ENCODE measurements at regions of chr18 and their contacts with region 1.

Region 1: DNA sequence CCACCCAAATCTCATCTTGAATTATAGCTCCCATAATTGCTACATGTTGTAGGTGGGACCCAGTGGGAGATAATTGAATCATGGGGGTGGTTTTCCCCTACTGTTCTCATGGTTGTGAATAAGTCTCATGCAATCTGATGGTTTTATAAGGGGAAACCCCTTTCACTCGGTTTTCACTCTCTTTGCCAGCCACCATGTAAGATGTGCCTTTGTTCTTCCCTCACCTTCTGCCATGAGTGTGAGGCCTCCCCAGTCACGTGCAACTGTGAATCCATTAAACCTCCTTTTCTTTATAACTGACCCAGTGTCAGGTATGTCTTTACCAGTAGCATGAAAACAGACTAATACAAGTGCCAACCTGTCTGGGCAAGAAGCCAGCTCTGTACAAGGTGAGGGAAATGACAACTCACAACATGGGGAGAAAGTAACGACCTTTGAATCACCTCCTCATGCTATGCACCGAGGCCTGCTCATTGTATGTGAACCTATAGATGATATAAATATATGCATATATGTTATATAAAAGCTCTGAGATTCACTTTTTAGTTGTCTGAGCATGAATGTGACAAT is 162.2 kb downstream of the ALPK2 start:
- DNase-seq: no peak
- H3K4me3 ChIP-seq: no peak overlapping the region
- H3K27ac ChIP-seq: no peak overlapping the region
- H3K4me1 ChIP-seq: no peaks in the 10 kb centered on the region
- H3K27me3 ChIP-seq: no peaks in the 10 kb centered on the region
- CTCF ChIP-seq: no peak
- EP300 ChIP-seq: no peak
- POLR2A ChIP-seq: no peak

Region 2: DNA sequence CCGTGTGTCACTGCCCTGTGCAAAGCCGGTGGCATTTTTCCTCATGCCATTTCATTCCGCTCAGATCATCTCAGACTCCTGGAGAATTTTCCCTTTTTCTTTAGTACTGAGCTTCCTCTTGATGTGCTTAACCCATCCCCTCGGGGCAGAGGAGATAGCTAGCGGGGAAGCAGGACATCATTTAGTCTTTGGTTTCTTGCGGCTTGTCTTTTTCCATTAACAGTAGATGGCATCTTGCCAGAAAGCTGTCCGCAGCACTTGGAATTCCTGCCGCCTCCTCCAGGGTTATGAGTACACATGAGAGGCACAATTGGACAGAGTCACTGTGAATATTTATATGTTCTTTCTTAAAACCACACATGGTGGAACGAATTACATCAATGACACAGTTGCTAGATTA is 64.5 kb before region 1 on chr18:
- intact Hi-C with region 1: loop called in 1 of 4 experiments (anchors 10 kb)
- DNase-seq: no peak
- H3K4me3 ChIP-seq: no peak overlapping the region
- H3K27ac ChIP-seq: no peak overlapping the region
- H3K4me1 ChIP-seq: peaks cover 3% of the 10 kb centered on the region
- H3K27me3 ChIP-seq: no peaks in the 10 kb centered on the region
- CTCF ChIP-seq: no peak
- EP300 ChIP-seq: no peak
- POLR2A ChIP-seq: no peak

Region 3: GRCh38 chr18:58429442-58429841 is 37.3 kb before region 1 on chr18:
- intact Hi-C with region 1: no loop called
- DNase-seq: no peak
- H3K4me3 ChIP-seq: no peak overlapping the region
- H3K27ac ChIP-seq: no peak overlapping the region
- H3K4me1 ChIP-seq: no peaks in the 10 kb centered on the region
- H3K27me3 ChIP-seq: no peaks in the 10 kb centered on the region
- CTCF ChIP-seq: no peak
- EP300 ChIP-seq: no peak
- POLR2A ChIP-seq: no peak

Region 4: GRCh38 chr18:58552057-58552461 is 85.3 kb after region 1 on chr18:
- intact Hi-C with region 1: no loop called
- DNase-seq: no peak
- H3K4me3 ChIP-seq: no peak overlapping the region
- H3K27ac ChIP-seq: no peak overlapping the region
- H3K4me1 ChIP-seq: no peaks in the 10 kb centered on the region
- H3K27me3 ChIP-seq: no peaks in the 10 kb centered on the region
- CTCF ChIP-seq: no peak
- EP300 ChIP-seq: no peak
- POLR2A ChIP-seq: no peak

Region 5: GRCh38 chr18:58635891-58636290 is 169.2 kb after region 1 on chr18:
- intact Hi-C with region 1: no loop called
- DNase-seq: no peak
- H3K4me3 ChIP-seq: no peak overlapping the region
- H3K27ac ChIP-seq: no peak overlapping the region
- H3K4me1 ChIP-seq: no peaks in the 10 kb centered on the region
- H3K27me3 ChIP-seq: no peaks in the 10 kb centered on the region
- CTCF ChIP-seq: no peak
- EP300 ChIP-seq: no peak
- POLR2A ChIP-seq: no peak